Testis (tissue), 5 donors: ENCODE measurements at regions of chr16 and their contacts with region 1.

Region 1: GRCh38 chr16:58494981-58495520 is 4.9 kb upstream of the NDRG4 start:
- DNase-seq: peak; percentile 95
- H3K4me3 ChIP-seq: no peak overlapping the region
- H3K27ac ChIP-seq: peak overlapping the region; percentile 47 to 72
- H3K4me1 ChIP-seq: peaks cover 31% of the 10 kb centered on the region
- H3K27me3 ChIP-seq: no peaks in the 10 kb centered on the region
- CTCF ChIP-seq: peak in 2 of 3 experiments; percentile 29 to 42
- POLR2A ChIP-seq: no peak

Region 2: GRCh38 chr16:58336332-58337089 is 158.5 kb before region 1 on chr16:
- intact Hi-C with region 1: loop called (anchors 5 kb)
- DNase-seq: peak; percentile 93
- H3K4me3 ChIP-seq: peak overlapping the region in 1 of 2 donors; percentile 26
- H3K27ac ChIP-seq: no peak overlapping the region
- H3K4me1 ChIP-seq: peaks cover 9% of the 10 kb centered on the region
- H3K27me3 ChIP-seq: no peaks in the 10 kb centered on the region
- CTCF ChIP-seq: peak; percentile 94 to 96 (median 95)
- POLR2A ChIP-seq: no peak

Region 3: GRCh38 chr16:58828901-58829545 is 334.0 kb after region 1 on chr16:
- intact Hi-C with region 1: no loop called
- DNase-seq: no peak
- H3K4me3 ChIP-seq: no peak overlapping the region
- H3K27ac ChIP-seq: no peak overlapping the region
- H3K4me1 ChIP-seq: no peaks in the 10 kb centered on the region
- H3K27me3 ChIP-seq: no peaks in the 10 kb centered on the region
- CTCF ChIP-seq: no peak
- POLR2A ChIP-seq: no peak